Heart left ventricle (tissue), 16 donors: ENCODE measurements at regions of chr6 and their contacts with region 1.

Region 1: GRCh38 chr6:167870321-167870720 is 43.6 kb downstream of the AFDN start:
- DNase-seq: no peak
- ATAC-seq: no peak
- H3K4me3 ChIP-seq: no peak overlapping the region
- H3K27ac ChIP-seq: no peak overlapping the region
- H3K4me1 ChIP-seq: no peaks in the 10 kb centered on the region
- H3K27me3 ChIP-seq: no peaks in the 10 kb centered on the region
- CTCF ChIP-seq: no peak
- POLR2A ChIP-seq: no peak

Region 2: DNA sequence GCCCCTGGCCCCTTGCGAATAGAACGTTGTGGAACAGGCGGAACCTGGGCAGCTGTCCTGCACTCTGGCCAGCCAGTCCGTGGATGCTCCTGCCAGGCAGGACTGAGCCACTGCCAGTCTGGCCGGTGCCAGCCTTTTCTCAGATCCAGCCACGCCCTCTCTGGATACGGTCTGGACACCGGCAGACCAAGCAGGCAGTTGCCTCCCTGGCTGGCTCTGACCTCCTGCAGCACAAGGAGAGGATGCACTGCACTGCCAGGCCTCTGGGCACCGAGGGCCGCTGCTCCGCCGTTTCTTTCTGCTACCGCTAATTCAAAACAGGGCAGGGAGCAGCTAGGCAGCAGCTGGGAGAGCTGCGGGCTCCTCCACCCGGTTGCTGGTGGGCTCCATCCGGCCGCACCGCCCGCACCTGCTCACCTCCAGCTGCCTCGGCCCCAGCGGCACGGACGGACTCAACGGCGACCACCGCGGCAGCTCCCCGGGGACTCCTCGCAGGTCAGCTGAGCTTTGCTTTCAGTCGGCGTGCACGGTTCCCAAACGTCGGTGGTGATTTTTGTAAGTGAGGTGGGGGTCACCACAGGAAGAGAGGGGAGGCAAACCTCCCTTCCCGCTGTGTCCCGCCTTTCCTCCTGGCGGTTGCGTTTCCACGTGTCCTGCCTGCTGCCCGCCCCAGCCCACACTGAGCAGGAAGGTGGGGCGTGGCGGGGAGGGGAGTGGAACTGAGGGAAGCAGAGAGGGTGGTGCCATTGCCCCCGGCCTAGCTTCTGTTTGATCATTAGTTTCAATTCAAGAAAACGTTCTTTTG is 73.9 kb before region 1 on chr6:
- intact Hi-C with region 1: no loop called
- DNase-seq: peak; percentile 43 to 81 (median 77)
- ATAC-seq: peak; percentile 84 to 91 (median 88)
- H3K4me3 ChIP-seq: peak overlapping the region in 11 of 12 donors; percentile 19 to 57 (median 49)
- H3K27ac ChIP-seq: peak overlapping the region in 2 of 12 donors; percentile 11 to 18
- H3K4me1 ChIP-seq: peaks cover 0 to 23% (median 9%) of the 10 kb centered on the region in 12 donors
- H3K27me3 ChIP-seq: peaks cover 0 to 27% (median 0%) of the 10 kb centered on the region in 9 donors
- CTCF ChIP-seq: peak in 2 of 12 donors; percentile 2 to 12
- POLR2A ChIP-seq: no peak

Region 3: GRCh38 chr6:167892835-167893815 is 22.8 kb after region 1 on chr6:
- intact Hi-C with region 1: loop called in 1 of 10 experiments (anchors 1 kb)
- DNase-seq: no peak
- ATAC-seq: no peak
- H3K4me3 ChIP-seq: no peak overlapping the region
- H3K27ac ChIP-seq: no peak overlapping the region
- H3K4me1 ChIP-seq: peaks cover 0 to under 1% (median 0%) of the 10 kb centered on the region in 12 donors
- H3K27me3 ChIP-seq: no peaks in the 10 kb centered on the region
- CTCF ChIP-seq: no peak
- POLR2A ChIP-seq: no peak

Region 4: DNA sequence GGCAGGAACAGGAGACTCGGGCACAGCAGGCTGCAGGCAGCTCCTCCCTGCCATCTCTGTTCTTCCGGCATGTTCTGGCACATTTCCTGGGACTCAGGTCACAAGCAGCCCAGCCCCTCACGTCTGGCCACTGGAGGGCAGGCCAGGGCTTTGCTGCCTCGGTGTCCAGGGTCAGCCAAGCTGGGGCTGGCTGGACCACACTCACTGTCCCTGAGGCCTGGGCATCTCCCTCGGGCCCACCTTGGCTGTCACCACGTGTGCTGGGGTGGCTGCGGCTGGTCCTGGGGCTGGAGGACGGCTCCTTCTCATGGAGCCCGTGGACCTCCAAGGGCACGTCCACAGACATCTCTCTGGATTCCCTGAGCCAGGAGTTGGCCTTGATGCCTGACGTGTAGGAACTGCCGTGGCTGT is 190.2 kb after region 1 on chr6:
- intact Hi-C with region 1: no loop called
- DNase-seq: peak; percentile 74 to 82 (median 80)
- ATAC-seq: peak; percentile 59 to 88 (median 77)
- H3K4me3 ChIP-seq: no peak overlapping the region
- H3K27ac ChIP-seq: no peak overlapping the region
- H3K4me1 ChIP-seq: peaks cover 3 to 26% (median 9%) of the 10 kb centered on the region in 12 donors
- H3K27me3 ChIP-seq: no peaks in the 10 kb centered on the region
- CTCF ChIP-seq: peak; percentile 42 to 79 (median 68)
- POLR2A ChIP-seq: no peak